T-cell (primary cell): ENCODE measurements at regions of chr9 and their contacts with region 1.

Region 1: GRCh38 chr9:15423231-15423985 is 732 bp downstream of the SNAPC3 start:
- DNase-seq: peak in 3 of 35 experiments; percentile 0 to 40 (median 4)
- ATAC-seq: peak in 1 of 4 experiments; percentile 4
- H3K4me3 ChIP-seq: peak overlapping the region; percentile 84 to 85
- H3K4me3 Mint-ChIP-seq: peak overlapping the region; percentile 88 to 93 (median 91)
- H3K27ac ChIP-seq: peak overlapping the region; percentile 25
- H3K27ac Mint-ChIP-seq: peak overlapping the region; percentile 84 to 89
- H3K4me1 ChIP-seq: peaks cover 11 to 29% of the 10 kb centered on the region in 2 experiments
- H3K4me1 Mint-ChIP-seq: peaks cover 33 to 47% (median 45%) of the 10 kb centered on the region in 3 donors
- H3K27me3 ChIP-seq: no peaks in the 10 kb centered on the region
- H3K27me3 Mint-ChIP-seq: no peaks in the 10 kb centered on the region

Region 2: DNA sequence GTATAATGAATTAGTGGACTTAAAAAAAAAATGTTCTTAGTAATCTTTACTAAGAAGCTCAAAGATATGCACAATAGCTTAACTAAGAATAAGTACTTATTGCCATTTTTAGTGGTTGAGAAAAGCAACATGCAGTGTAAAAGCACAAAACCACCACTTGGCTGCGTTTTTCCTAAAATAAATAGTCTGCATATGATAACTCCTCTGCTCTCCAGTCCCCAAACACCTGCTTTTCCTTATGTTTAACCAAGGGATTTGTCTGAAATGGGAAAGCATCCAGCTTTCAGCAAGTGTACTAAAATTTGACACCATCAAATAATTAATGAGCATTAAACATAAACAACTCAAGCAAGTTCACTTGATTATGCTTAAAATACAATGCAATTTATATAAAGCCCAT is 46.0 kb after region 1 on chr9:
- CTCF ChIA-PET with region 1: interaction called in 1 of 2 experiments, 13 read pairs
- POLR2A ChIA-PET with region 1: no interaction called
- DNase-seq: no peak
- ATAC-seq: no peak
- H3K4me3 ChIP-seq: no peak overlapping the region
- H3K4me3 Mint-ChIP-seq: no peak overlapping the region
- H3K27ac ChIP-seq: no peak overlapping the region
- H3K27ac Mint-ChIP-seq: peak overlapping the region in 1 of 2 donors; percentile 46
- H3K4me1 ChIP-seq: no peaks in the 10 kb centered on the region
- H3K4me1 Mint-ChIP-seq: peaks cover 7 to 19% (median 10%) of the 10 kb centered on the region in 3 donors
- H3K27me3 ChIP-seq: no peaks in the 10 kb centered on the region
- H3K27me3 Mint-ChIP-seq: no peaks in the 10 kb centered on the region